Posterior vena cava (tissue), 2 donors: ENCODE measurements at regions of chr6 and their contacts with region 1.

Region 1: DNA sequence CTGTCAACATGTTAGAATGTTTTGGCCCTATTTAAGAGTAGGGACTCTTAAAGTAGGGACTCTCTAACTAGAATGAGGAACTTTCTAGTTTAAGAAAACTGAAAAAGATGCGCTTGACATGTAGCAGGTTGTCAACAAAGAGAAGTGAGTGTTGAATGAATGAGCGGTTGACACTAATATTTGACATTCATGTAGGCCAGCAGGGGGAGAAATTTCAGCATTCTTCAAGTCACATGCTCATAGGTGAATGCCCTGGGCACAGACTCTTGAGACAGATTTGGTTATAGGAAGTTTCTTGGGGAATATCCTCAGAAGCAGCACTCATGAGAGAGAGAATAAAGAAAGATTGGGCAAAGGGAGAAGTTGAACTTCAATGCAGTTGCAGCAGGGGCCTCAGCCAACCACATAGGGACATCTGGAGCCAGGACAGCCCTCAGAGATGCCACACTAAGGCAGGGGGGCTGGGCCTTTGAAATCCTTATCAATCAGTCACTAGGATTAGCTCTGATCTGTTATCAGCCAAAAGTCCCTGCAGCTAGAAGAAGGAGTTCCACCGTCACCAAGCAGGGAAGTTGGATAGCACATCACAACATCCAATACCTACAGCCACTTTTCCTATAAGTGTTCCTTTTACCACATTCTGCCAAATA is 145.1 kb upstream of the FKBP1C start:
- DNase-seq: no peak

Region 2: DNA sequence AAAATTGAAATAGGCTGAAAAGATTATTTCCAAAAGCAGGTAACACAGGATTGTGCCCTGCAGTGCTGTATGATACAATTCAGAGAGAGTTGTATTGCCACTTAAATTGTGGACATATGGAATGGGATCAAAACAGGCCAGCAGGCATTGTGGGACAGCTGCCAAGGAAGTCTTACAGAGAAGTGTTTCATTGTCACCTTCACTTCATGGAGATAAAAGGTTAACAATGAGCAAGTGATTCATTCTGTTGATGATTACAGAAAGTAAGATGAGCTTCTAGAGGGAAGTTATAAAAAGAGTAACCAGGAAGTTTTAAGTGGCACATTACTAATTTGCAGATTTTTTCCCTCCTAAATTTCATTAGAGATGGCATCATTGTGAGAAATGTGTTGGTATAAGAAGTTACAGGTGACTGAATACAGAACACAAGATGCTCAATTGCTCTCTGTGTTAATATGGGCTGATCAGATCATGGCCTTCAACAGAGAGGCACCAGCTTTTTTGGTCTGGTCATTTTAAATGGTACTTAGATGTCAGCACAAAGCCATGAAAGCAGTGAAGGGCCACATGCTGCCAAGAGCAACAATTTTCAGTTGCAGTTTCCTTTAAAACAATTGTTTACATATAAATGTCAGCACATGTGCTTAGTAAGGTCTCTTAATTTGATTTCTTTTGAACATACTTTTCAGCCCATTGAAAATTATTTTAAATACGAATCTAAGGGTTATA is 257.5 kb before region 1 on chr6:
- intact Hi-C with region 1: no loop called
- DNase-seq: no peak

Region 3: GRCh38 chr6:64113704-64114103 is 1047.5 kb after region 1 on chr6:
- intact Hi-C with region 1: loop called in 1 of 2 experiments (anchors 5 kb)
- DNase-seq: no peak